Activated CD8-positive, alpha-beta T cell treated with anti-CD3 and anti-CD28 coated beads for 36 hours (primary cell): ENCODE measurements at regions of chr5 and their contacts with region 1.

Region 1: DNA sequence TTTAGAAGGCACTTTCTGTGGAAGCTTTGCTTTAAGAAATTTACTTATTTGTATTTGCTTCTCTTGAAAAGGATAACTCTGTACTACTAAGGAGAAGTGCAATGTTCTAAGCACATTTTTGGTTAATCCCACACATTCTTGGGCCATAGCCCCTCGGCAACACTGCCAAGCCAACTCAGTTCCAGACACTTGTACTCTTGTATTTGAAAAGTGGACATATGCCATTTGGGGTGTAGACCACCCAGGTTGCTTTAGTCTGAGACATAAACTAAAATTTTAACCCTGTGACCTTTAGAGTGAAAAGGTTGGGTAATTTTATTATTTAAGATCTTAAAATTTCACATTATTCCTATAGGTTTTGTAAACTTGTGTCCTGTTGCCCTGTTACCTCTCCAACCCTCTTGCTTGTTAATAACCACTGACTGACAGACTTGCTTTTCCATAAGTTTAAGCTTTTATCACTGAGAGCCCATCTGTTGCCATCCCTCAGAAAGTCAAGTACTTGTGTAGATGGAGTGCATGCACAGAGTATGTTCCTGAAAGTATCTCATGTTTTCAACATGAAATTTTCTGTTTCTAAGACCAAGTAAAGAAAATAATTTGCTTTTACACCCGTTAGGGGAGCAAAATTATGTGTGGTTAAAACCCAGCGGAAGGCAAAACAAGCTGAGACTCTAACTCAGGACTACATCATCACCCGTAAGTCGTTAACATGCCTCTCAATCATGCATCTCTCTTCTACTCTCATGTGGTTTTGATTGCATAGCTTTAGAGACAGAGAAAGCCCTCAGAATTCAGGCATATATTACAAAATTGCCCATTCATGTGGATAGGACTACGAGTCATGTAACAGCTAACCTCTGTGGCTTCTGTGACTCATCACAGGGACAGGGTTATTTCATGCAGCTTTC is 117.3 kb downstream of the GDNF start:
- DNase-seq: peak; percentile 73
- ATAC-seq: peak; percentile 91
- H3K4me3 Mint-ChIP-seq: peak overlapping the region; percentile 11
- H3K27ac Mint-ChIP-seq: peak overlapping the region; percentile 86
- H3K4me1 Mint-ChIP-seq: peaks cover 29% of the 10 kb centered on the region
- H3K27me3 Mint-ChIP-seq: no peaks in the 10 kb centered on the region
- CTCF ChIP-seq: no peak

Region 2: DNA sequence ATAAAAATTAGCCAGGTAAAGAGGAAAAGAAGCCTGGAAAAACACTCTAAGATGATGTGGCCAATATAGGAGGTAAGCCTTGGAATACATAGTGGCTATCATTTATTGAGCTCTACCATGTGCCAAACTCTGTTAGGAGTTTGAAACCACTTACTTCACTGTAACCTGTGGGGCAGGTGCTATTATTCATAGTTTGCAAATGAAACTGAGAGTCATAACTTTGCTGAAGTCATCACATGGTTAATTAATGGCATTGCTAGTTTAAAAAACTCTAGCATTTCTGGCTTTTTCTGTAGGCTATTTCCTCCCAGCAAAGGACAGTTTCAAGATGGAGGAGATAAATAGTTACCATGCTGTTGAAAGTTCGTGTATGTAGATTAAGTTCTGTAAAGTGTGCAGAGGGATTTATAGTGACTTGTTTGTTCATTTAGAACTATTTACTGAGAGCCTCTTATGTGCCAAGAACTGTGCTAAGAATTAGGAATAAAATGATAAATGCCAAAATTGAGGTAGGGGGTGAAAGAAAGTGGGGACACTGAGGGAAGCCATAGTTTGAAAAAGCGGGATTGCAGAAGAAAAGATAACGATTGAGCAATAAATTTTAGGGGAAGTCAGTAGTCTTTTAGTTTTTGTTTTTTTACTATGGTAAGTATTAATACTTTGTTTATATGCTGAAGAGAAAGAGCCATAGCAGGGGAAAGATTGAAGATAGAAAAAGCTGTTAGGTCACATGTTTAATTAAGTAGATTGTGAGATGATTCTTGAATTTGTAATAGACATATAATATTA is 286.2 kb before region 1 on chr5:
- CTCF ChIA-PET with region 1: no interaction called
- POLR2A ChIA-PET with region 1: no interaction called
- intact Hi-C with region 1: no loop called
- DNase-seq: no peak
- ATAC-seq: no peak
- H3K4me3 Mint-ChIP-seq: no peak overlapping the region
- H3K27ac Mint-ChIP-seq: no peak overlapping the region
- H3K4me1 Mint-ChIP-seq: peaks cover 16% of the 10 kb centered on the region
- H3K27me3 Mint-ChIP-seq: no peaks in the 10 kb centered on the region
- CTCF ChIP-seq: no peak

Region 3: DNA sequence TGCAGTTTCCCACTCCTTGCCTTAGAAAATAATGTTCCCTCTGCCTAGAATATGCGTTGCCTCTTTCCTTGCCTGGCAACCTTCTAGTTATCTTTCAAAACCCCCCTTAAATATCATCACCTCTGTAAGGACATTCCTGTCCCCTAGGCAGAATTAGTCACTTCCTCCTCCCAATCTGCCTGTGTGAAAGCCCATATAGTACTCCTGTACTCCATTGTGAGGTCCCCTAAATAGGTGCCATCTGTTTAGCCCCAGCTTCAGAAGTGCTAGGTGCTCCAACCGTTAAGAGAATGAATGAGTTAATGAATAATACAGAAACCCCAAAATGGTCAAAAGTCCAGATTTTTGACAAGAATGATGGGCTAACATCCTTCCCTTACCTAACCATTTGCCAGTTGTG is 64.1 kb before region 1 on chr5:
- CTCF ChIA-PET with region 1: no interaction called
- POLR2A ChIA-PET with region 1: no interaction called
- intact Hi-C with region 1: no loop called
- DNase-seq: no peak
- ATAC-seq: no peak
- H3K4me3 Mint-ChIP-seq: no peak overlapping the region
- H3K27ac Mint-ChIP-seq: no peak overlapping the region
- H3K4me1 Mint-ChIP-seq: peaks cover 5% of the 10 kb centered on the region
- H3K27me3 Mint-ChIP-seq: no peaks in the 10 kb centered on the region
- CTCF ChIP-seq: no peak

Region 4: DNA sequence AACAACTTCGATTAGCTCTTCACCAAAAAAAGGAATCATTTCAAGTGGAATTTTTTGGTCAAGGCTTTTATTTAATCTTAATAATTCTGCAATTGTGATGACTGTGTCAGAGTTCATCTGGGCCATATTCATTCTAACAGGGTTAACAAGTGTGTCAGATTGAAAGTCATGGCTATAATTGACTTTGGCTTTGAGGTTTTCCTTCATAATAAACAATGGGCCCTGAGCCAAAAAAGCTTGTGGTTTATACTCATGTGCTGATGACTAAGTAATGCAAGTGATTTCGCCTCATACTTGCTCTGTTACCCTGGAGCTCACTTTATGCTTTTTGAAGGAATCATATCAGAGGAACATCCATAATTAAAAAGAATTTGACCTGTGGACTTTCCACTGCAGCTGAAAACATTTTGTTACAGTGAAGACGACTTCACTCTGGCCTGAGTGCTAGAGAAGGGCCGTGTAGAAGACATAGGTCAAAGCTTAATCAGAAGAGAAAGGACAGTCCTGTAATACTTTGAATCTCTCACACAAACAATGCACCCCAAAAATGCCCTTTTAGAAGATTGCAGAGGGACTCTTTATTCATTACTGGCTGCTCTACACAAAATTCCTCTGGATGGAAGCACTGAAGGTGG is 15.7 kb after region 1 on chr5:
- CTCF ChIA-PET with region 1: interaction called, 10 read pairs
- POLR2A ChIA-PET with region 1: interaction called, 10 read pairs
- intact Hi-C with region 1: loop called (anchors 2 kb)
- DNase-seq: peak; percentile 47
- ATAC-seq: peak; percentile 68
- H3K4me3 Mint-ChIP-seq: no peak overlapping the region
- H3K27ac Mint-ChIP-seq: no peak overlapping the region
- H3K4me1 Mint-ChIP-seq: peaks cover 17% of the 10 kb centered on the region
- H3K27me3 Mint-ChIP-seq: no peaks in the 10 kb centered on the region
- CTCF ChIP-seq: no peak